K562 (cell line): ENCODE measurements at regions of chr13 and their contacts with region 1.

Region 1: DNA sequence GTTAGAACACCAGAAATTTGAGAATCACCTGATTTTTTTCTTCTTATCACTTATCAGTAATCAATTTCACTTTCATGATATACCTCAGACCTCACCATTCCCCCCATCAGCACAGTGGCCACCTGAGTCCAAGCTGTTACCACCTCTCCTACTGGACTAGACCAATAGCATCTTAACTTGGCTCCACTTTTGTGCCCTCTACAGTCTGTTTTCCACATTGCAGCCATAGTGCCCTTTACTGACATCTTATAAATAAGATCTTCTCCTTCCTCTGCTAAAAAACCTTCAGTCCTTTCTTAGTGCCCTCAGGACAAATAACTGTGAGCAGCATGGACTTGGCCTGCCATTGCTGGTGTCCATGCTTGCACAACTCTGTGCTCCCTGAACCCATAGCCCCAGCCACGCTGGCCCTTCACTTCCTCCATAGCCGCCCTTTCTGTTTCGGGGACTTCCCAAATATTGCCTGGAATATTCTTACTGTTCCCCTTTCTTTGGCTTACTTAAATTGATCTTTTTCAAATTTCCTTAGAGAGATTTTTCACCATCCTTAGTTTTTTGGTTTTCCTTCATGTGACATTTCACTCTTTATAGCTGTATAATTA is 380.8 kb downstream of the LMO7 start:
- DNase-seq: peak; percentile 13 to 58 (median 16)
- ATAC-seq: peak; percentile 92
- H3K4me3 ChIP-seq: no peak overlapping the region
- H3K27ac ChIP-seq: no peak overlapping the region
- H3K4me1 ChIP-seq: no peaks in the 10 kb centered on the region; a peak in 1 of 5 replicates
- H3K27me3 ChIP-seq: no peaks in the 10 kb centered on the region
- CTCF ChIP-seq: peak; percentile 51 to 62 (median 61); a peak in 5 of 6 replicates
- EP300 ChIP-seq: no peak
- POLR2A ChIP-seq: no peak
- RAD21 ChIP-seq: peak; percentile 31 to 68; a peak in 2 of 4 replicates

Region 2: DNA sequence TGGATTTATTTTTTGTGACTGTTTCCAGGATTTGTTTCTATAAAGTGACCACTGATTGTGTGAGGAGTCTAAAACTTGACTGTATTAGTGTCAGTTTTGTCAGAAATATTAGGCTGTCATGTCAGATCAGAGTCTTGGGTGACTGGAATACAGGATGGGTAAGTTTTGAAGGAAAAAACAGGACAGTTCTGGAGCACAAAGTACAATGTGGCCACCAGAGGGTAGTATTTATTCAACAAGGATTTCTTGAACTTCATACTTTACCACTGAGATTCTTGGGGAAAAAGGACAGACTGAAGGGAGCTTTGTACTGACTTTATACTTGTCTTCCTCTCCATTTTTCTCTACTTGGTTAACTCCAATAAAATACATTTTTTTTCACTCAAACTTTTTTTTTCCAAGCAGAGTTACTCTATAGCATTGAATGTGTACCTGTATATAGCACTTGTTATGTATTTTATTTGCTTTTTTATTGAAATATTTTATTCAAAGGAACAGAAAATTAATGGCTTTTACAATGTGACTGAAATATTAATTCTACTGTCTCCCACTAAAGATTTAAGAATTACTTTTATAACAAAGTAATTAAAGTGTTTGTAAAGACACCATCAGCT is 329.6 kb before region 1 on chr13:
- CTCF ChIA-PET with region 1: no interaction called
- POLR2A ChIA-PET with region 1: no interaction called
- in situ Hi-C with region 1: no loop called
- intact Hi-C with region 1: loop called (anchors 10 kb)
- DNase-seq: peak; percentile 6 to 11 (median 9)
- ATAC-seq: peak; percentile 64; the same call in 2 of the 3 replicates
- H3K4me3 ChIP-seq: no peak overlapping the region
- H3K27ac ChIP-seq: no peak overlapping the region
- H3K4me1 ChIP-seq: no peaks in the 10 kb centered on the region
- H3K27me3 ChIP-seq: no peaks in the 10 kb centered on the region
- CTCF ChIP-seq: peak in 2 of 3 experiments; percentile 33 to 35; a peak in 1 of 6 replicates
- EP300 ChIP-seq: no peak
- POLR2A ChIP-seq: no peak
- RAD21 ChIP-seq: 0 out of 4 replicates have a peak, but pooled peaks of 1 of the 2 experiments have one; percentile 7